ENCODE measurements at regions of chr4 and their contacts with region 1.

Region 1: DNA sequence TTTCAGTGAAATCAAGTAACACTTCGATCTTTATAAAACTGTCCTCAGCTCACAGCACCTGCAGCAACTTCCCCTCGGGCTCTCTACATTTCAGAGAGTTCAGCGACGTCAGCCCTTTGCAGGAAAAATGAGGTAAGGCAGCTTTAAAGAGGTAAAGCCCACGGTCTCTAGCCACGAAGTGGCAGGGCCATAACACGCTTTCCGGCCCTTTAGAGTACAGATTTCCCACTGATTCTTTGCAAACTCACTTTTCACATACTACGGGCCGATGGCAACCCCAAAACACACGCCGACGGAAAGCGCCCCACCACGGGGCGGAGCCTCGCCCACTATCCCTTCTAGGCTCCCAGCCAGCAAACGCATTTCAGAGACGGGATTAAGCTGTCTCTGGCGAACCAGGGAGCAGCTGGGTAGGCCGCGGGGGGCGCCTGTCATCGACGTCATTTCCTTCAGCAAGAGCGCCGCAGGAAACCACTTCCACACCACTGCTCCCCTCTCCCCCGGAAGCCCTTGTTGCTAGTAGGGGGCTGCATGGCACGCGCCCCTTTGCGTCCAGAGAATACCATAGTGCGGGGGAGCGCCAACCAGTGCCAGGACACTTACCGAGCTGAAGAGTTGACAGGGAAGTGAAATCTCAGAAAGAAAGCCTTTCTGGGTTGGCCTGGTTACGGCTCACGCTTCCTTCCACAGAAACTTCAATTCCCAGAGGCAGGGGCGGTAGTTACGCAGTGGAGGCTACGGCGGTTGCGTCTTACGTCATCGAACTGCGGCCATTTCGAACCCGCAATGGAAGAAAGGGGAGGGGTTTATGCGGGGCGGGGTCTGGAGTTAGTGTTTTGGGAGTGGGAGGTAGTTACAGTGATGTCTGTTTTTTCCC is at the start of gene TRMT10A:
- DNase-seq: peak; percentile 88 to 97
- ATAC-seq: peak; percentile 85 to 94 (median 88)
- H3K4me3 ChIP-seq: peak within 1 kb of the TSS; percentile 73
- H3K4me3 Mint-ChIP-seq: peak within 1 kb of the TSS; percentile 94
- H3K27ac ChIP-seq: peak within 1 kb of the TSS; percentile 94
- H3K27ac Mint-ChIP-seq: peak within 1 kb of the TSS; percentile 99 to 100
- H3K4me1 ChIP-seq: peaks cover 10% of the 10 kb centered on the region
- H3K4me1 Mint-ChIP-seq: peaks cover 6 to 11% of the 10 kb centered on the region in 2 donors
- H3K27me3 ChIP-seq: peaks cover 14% of the 10 kb centered on the region
- H3K27me3 Mint-ChIP-seq: peaks cover 21 to 32% of the 10 kb centered on the region in 2 donors
- CTCF ChIP-seq: no peak
- total RNA-seq, gene TRMT10A: 1.6 to 2.6 (median 2.2) TPM

Region 2: GRCh38 chr4:99808260-99808857 is 244.8 kb after region 1 on chr4:
- intact Hi-C with region 1: loop called (anchors 2 kb)
- DNase-seq: peak in 1 of 2 donors; percentile 82
- ATAC-seq: peak; percentile 66 to 88 (median 78)
- H3K4me3 ChIP-seq: no peak overlapping the region
- H3K4me3 Mint-ChIP-seq: no peak overlapping the region
- H3K27ac ChIP-seq: no peak overlapping the region
- H3K27ac Mint-ChIP-seq: no peak overlapping the region
- H3K4me1 ChIP-seq: no peaks in the 10 kb centered on the region
- H3K4me1 Mint-ChIP-seq: no peaks in the 10 kb centered on the region
- H3K27me3 ChIP-seq: peaks cover 2% of the 10 kb centered on the region
- H3K27me3 Mint-ChIP-seq: peaks cover 7 to 43% of the 10 kb centered on the region in 2 donors
- CTCF ChIP-seq: peak; percentile 66

Region 3: DNA sequence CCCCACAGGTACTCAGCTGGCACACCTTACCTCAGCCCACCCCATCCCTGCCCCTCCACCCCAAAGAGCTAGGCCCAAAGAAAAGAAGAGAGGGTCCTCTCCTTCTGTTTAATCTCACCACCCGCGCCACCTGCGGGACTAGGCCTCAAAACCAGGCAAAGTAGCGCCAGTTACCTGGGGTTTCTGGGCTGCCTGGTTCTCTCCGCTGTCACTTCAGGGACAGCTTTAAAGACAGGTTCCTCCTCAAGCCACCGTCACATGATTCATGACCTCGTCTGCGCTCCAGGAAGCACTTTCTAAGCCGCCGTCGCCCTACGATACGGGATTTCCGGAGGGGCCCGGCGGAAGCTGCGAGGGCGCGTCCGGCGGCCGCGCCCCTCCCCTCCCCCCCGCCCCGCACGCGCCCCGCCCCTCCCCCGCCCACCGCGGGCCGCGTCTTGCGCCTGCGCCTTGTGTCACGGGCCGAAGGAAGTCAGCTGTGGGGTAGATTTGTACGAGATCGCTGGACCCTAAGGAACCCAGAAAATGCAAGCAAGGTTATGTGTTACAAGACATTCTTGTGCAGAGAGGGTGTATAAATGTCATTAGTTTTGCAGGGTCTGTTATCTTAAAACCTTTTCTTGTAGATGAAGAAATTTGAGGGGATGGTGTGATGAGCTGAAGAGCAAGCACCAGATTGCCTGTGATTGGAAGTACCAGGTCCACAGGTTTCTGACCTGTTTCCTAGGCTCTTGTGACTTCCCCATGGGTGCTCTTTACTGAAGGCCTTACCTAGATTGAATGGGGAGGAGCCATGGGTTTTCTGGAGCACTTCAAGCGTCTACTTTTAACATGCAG is 330.8 kb after region 1 on chr4 and contains the start of gene LAMTOR3:
- intact Hi-C with region 1: loop called (anchors 1 kb)
- DNase-seq: peak; percentile 80 to 96
- ATAC-seq: peak; percentile 96 to 99 (median 98)
- H3K4me3 ChIP-seq: peak within 1 kb of the TSS; percentile 69
- H3K4me3 Mint-ChIP-seq: peak within 1 kb of the TSS; percentile 86
- H3K27ac ChIP-seq: peak within 1 kb of the TSS; percentile 82
- H3K27ac Mint-ChIP-seq: peak within 1 kb of the TSS; percentile 81 to 95
- H3K4me1 ChIP-seq: peaks cover 20% of the 10 kb centered on the region
- H3K4me1 Mint-ChIP-seq: peaks cover 32 to 34% of the 10 kb centered on the region in 2 donors
- H3K27me3 ChIP-seq: no peaks in the 10 kb centered on the region
- H3K27me3 Mint-ChIP-seq: no peaks in the 10 kb centered on the region
- CTCF ChIP-seq: no peak
- total RNA-seq, gene LAMTOR3: 18.1 to 29.9 (median 25.9) TPM

Region 4: GRCh38 chr4:99949034-99949998 is 385.8 kb after region 1 on chr4:
- intact Hi-C with region 1: loop called (anchors 1 kb)
- DNase-seq: peak; percentile 72 to 95
- ATAC-seq: peak; percentile 26 to 59 (median 35)
- H3K4me3 ChIP-seq: peak overlapping the region; percentile 100
- H3K4me3 Mint-ChIP-seq: no peak overlapping the region
- H3K27ac ChIP-seq: peak overlapping the region; percentile 91
- H3K27ac Mint-ChIP-seq: no peak overlapping the region
- H3K4me1 ChIP-seq: peaks cover 20% of the 10 kb centered on the region
- H3K4me1 Mint-ChIP-seq: peaks cover 25 to 32% of the 10 kb centered on the region in 2 donors
- H3K27me3 ChIP-seq: no peaks in the 10 kb centered on the region
- H3K27me3 Mint-ChIP-seq: no peaks in the 10 kb centered on the region
- CTCF ChIP-seq: peak; percentile 81

Region 5: GRCh38 chr4:100093091-100093866 is 529.7 kb after region 1 on chr4:
- intact Hi-C with region 1: loop called (anchors 10 kb)
- DNase-seq: peak; percentile 64 to 96
- ATAC-seq: peak; percentile 97 to 98 (median 97)
- H3K4me3 ChIP-seq: no peak overlapping the region
- H3K4me3 Mint-ChIP-seq: no peak overlapping the region
- H3K27ac ChIP-seq: peak overlapping the region; percentile 43
- H3K27ac Mint-ChIP-seq: peak overlapping the region; percentile 64 to 89
- H3K4me1 ChIP-seq: peaks cover 5% of the 10 kb centered on the region
- H3K4me1 Mint-ChIP-seq: peaks cover 18 to 26% of the 10 kb centered on the region in 2 donors
- H3K27me3 ChIP-seq: no peaks in the 10 kb centered on the region
- H3K27me3 Mint-ChIP-seq: peaks cover 0 to 8% of the 10 kb centered on the region in 2 donors
- CTCF ChIP-seq: peak; percentile 88